ENCODE measurements at regions of chr12 and their contacts with region 1.

Region 1: GRCh38 chr12:96350982-96351381 is 49.3 kb downstream of the CDK17 start:
- DNase-seq: no peak
- H3K4me3 Mint-ChIP-seq: no peak overlapping the region
- H3K27ac Mint-ChIP-seq: no peak overlapping the region
- H3K4me1 Mint-ChIP-seq: peaks cover 72% of the 10 kb centered on the region
- H3K27me3 Mint-ChIP-seq: no peaks in the 10 kb centered on the region

Region 2: DNA sequence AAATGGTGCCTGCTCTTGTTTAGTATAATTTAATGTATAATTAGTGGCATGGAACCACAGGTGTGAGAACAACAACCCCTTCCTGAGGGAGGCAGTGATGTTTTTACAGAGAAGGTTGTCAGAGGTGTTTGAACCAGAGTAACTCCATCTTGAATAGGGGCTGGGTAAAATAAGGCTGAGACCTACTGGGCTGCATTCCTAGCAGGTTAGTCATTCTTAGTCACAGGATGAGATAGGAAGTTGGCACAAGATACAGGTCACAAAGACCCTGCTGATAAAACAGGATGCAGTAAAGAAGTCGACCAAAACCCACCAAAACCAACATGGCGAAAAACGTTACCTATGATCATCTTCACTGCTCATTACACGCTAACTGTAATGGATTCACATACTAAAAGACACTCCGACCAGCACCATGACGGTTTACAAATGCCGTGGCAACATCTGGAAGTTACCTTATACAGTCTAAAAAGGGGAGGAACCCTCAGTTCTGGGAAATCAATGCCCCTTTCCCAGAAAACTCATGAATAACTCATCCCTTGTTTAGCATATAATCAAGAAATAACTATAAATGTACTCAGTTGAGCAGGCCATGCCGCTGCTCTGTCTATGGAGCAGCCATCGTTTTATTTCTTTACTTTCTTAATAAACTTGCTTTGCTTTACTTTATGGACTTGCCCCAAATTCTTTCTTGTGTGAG is 267.8 kb before region 1 on chr12:
- intact Hi-C with region 1: no loop called
- DNase-seq: no peak
- H3K4me3 Mint-ChIP-seq: no peak overlapping the region
- H3K27ac Mint-ChIP-seq: no peak overlapping the region
- H3K4me1 Mint-ChIP-seq: no peaks in the 10 kb centered on the region
- H3K27me3 Mint-ChIP-seq: no peaks in the 10 kb centered on the region

Region 3: GRCh38 chr12:96303653-96304052 is 47.3 kb before region 1 on chr12:
- intact Hi-C with region 1: loop called (anchors 5 kb)
- DNase-seq: no peak
- H3K4me3 Mint-ChIP-seq: no peak overlapping the region
- H3K27ac Mint-ChIP-seq: no peak overlapping the region
- H3K4me1 Mint-ChIP-seq: peaks cover 15% of the 10 kb centered on the region
- H3K27me3 Mint-ChIP-seq: no peaks in the 10 kb centered on the region

Region 4: DNA sequence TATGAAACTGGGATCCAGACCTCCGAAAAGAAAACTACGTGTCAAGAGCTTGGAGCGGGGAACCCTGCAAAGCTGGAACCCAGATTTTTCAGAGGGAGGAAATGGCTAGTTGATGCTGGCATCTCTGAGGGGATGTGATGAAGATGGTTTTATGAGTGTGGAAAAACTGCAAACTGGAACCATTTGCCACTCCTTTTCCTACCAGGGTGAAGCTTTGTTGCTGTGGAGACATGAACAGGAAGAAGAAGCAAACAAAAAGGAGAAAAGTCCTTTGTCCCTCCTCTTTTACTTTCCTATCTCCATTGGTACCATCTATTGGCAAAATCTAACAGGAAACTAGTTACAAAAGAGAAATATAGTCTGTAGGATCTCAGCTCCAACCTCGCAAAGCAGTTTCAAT is 10.1 kb after region 1 on chr12:
- intact Hi-C with region 1: loop called (anchors 1 kb)
- DNase-seq: no peak
- H3K4me3 Mint-ChIP-seq: no peak overlapping the region
- H3K27ac Mint-ChIP-seq: no peak overlapping the region
- H3K4me1 Mint-ChIP-seq: peaks cover 35% of the 10 kb centered on the region
- H3K27me3 Mint-ChIP-seq: no peaks in the 10 kb centered on the region

Region 5: DNA sequence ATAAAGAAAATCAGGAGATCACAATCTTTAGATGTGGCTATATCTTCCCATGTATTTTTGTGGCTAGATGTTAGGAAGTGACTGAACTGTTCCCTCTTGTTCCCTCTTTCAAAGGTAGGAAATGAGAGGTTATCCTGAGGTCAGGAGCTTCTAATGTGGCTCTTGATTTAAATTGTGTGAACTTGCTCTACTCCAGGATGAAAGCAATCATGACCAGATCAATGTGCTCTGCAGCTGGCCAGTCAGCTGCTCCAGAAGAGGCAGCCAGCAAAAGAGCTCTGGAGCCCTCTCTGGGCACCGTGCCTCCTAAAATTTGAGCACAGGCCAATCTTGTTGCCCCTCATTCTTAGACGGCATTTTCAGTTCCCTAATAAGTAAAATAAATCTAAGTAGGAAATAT is 17.3 kb after region 1 on chr12:
- intact Hi-C with region 1: loop called (anchors 2 kb)
- DNase-seq: no peak
- H3K4me3 Mint-ChIP-seq: no peak overlapping the region
- H3K27ac Mint-ChIP-seq: no peak overlapping the region
- H3K4me1 Mint-ChIP-seq: peaks cover 46% of the 10 kb centered on the region
- H3K27me3 Mint-ChIP-seq: no peaks in the 10 kb centered on the region